HCT116 (cell line): ENCODE measurements at regions of chr20 and their contacts with region 1.

Region 1: DNA sequence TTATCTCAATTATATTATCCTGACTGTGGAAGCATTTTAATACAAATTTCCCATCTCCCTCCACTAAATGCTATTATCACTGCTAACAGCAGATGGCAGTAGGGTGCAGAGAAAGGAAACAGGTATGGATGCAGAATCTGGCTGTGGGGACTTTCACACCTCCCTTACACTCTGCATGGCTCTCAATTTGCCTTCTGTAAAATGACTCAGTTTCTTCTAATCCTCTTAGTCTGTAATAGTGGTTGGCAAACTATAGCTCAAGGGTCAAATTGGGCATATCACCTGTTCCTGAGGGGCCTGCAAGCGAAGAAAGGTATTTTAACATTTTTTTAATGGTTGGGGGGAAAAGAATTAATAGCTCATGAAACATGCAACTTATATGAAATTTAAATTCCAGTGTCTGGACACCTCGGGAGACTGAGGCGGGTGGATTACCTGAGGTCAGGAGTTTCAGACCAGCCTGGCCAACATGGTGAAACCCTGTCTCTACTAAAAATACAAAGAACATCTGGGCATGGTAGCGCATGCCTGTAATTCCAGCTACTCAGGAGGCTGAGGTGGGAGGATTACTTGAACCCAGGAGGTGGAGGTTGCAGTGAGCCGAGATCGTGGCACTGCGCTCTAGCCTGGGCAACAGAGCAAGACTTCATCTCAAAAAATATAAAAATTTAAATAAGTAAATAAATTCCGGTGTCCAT is 83.5 kb downstream of the ZMYND8 start:
- DNase-seq: peak; percentile 52
- ATAC-seq: peak; percentile 67
- H3K4me3 ChIP-seq: no peak overlapping the region
- H3K27ac ChIP-seq: no peak overlapping the region
- H3K4me1 ChIP-seq: peaks cover 36 to 44% of the 10 kb centered on the region in 2 experiments
- H3K27me3 ChIP-seq: no peaks in the 10 kb centered on the region
- CTCF ChIP-seq: peak; percentile 81 to 95 (median 93)
- POLR2A ChIP-seq: no peak
- RAD21 ChIP-seq: peak; percentile 96

Region 2: GRCh38 chr20:47196091-47197081 is 76.7 kb before region 1 on chr20:
- CTCF ChIA-PET with region 1: interaction called, 7 read pairs
- POLR2A ChIA-PET with region 1: no interaction called
- RAD21 ChIA-PET with region 1: interaction called, 3 read pairs
- intact Hi-C with region 1: loop called (anchors 5 kb)
- DNase-seq: peak; percentile 62
- ATAC-seq: peak; percentile 75
- H3K4me3 ChIP-seq: no peak overlapping the region
- H3K27ac ChIP-seq: no peak overlapping the region
- H3K4me1 ChIP-seq: peaks cover 16 to 45% of the 10 kb centered on the region in 2 experiments
- H3K27me3 ChIP-seq: no peaks in the 10 kb centered on the region
- CTCF ChIP-seq: peak; percentile 92 to 98 (median 96)
- POLR2A ChIP-seq: no peak
- RAD21 ChIP-seq: peak; percentile 99

Region 3: GRCh38 chr20:47317127-47317895 is 44.3 kb after region 1 on chr20:
- CTCF ChIA-PET with region 1: no interaction called
- POLR2A ChIA-PET with region 1: interaction called, 6 read pairs
- RAD21 ChIA-PET with region 1: interaction called in 1 of 2 experiments, 5 read pairs
- intact Hi-C with region 1: loop called (anchors 5 kb)
- DNase-seq: peak; percentile 87
- ATAC-seq: peak; percentile 65
- H3K4me3 ChIP-seq: peak overlapping the region; percentile 28 to 51
- H3K27ac ChIP-seq: peak overlapping the region; percentile 92
- H3K4me1 ChIP-seq: peaks cover 81 to 87% of the 10 kb centered on the region in 2 experiments
- H3K27me3 ChIP-seq: no peaks in the 10 kb centered on the region
- CTCF ChIP-seq: no peak
- POLR2A ChIP-seq: no peak
- RAD21 ChIP-seq: no peak

Region 4: DNA sequence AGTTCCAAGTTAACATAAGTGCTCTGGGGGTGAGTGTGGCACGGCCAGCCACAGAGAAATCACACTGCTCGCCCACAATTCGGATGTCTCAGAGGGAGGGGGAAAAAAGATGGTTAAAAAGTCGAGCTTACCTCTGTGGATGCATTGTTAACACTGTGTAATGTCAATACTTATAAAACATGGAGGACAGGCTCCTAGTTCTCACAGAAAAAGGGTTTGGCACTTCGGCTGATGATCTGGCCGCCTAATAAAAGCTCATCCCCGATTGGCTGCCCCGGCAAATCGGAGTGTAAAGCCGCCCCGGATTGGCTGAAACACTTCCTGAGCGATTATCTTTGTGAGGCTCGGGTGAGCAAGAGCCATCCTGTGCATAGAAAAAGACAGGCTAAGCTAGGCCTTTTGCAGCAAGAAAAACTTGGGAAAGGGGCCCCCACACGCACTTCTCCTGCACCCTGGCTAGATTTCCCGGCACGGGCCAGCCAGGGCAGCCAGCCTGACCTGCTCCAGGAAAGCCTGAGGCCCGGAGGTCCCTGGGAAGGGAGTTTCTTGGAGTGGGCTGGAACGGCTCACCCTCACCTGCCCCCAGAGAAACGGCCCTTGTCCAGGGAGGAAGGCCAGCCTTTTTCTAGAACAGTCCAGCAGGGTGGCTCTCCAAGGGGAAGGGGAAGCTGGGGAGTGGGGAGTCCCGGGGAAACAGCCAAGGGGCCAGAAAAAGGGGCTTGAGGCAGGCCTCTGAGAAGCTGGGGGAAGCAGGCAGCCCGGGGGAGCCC is 83.7 kb after region 1 on chr20 and contains the start of gene ZMYND8:
- CTCF ChIA-PET with region 1: interaction called, 10 read pairs
- POLR2A ChIA-PET with region 1: interaction called, 4 read pairs
- RAD21 ChIA-PET with region 1: interaction called in 1 of 2 experiments, 3 read pairs
- intact Hi-C with region 1: no loop called
- DNase-seq: peak; percentile 77
- ATAC-seq: peak; percentile 61
- H3K4me3 ChIP-seq: peak within 1 kb of the TSS; percentile 53 to 60
- H3K27ac ChIP-seq: peak within 1 kb of the TSS; percentile 98
- H3K4me1 ChIP-seq: peaks cover 69 to 80% of the 10 kb centered on the region in 2 experiments
- H3K27me3 ChIP-seq: no peaks in the 10 kb centered on the region
- CTCF ChIP-seq: no peak
- POLR2A ChIP-seq: peak; percentile 74
- RAD21 ChIP-seq: no peak
- total RNA-seq, gene ZMYND8: 29.0 TPM

Region 5: DNA sequence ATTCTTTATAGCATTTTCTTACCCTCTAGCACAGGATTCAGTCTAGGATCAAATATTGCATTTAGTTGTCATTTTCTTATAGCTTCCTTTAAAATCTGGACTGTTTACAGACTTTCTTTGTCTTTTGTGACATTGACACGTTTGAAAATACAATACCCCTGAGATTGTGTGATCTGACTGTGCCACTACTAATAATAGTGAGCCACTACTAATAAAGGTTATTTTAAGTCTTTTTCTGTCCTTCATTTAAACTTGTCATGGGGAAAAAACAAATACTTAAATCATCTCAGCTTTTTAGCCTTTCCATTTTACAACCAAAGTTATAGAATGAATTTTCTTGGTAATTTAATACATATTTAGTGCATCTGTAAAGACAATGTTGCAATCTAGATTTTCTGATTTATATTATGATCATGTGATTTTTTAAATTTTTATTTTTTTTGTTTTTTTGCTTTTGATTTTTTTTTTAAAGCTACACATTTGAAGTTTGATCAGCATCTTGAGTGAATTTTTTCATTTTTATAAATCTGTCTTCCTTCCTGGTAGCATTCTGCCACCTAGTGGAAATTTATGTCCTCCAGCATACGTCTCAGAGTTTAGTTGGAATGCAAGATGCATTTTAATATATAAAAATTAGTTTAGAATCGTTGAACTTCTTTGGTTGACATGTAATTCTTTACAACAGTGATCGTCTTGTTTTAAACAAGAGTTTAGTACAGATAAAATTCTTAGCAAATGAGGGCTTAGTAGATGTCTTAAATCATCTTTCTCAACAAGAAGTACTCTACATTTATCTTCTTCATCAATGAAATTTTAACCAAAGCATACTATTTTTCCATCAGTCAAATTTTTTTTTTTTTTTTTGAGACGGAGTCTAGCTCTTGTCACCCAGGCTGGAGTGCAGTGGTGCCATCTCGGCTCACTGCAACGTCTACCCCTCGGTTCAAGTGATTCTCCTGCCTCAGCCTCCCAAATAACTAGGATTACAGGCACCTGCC is 348.1 kb after region 1 on chr20:
- CTCF ChIA-PET with region 1: interaction called, 23 read pairs
- POLR2A ChIA-PET with region 1: no interaction called
- RAD21 ChIA-PET with region 1: interaction called, 3 read pairs
- intact Hi-C with region 1: loop called (anchors 1 kb)
- DNase-seq: peak; percentile 51
- ATAC-seq: no peak
- H3K4me3 ChIP-seq: no peak overlapping the region
- H3K27ac ChIP-seq: no peak overlapping the region
- H3K4me1 ChIP-seq: peaks cover 0 to 6% of the 10 kb centered on the region in 2 experiments; a peak in 2 of 4 replicates
- H3K27me3 ChIP-seq: no peaks in the 10 kb centered on the region
- CTCF ChIP-seq: peak; percentile 66 to 79 (median 73); a peak in 5 of 6 replicates
- POLR2A ChIP-seq: no peak
- RAD21 ChIP-seq: peak; percentile 83

Region 6: GRCh38 chr20:48049641-48050040 is 776.6 kb after region 1 on chr20:
- CTCF ChIA-PET with region 1: no interaction called
- POLR2A ChIA-PET with region 1: no interaction called
- RAD21 ChIA-PET with region 1: no interaction called
- intact Hi-C with region 1: no loop called
- DNase-seq: no peak
- ATAC-seq: no peak
- H3K4me3 ChIP-seq: no peak overlapping the region
- H3K27ac ChIP-seq: no peak overlapping the region
- H3K4me1 ChIP-seq: 0 out of 4 replicates have a peak, but pooled peaks cover 0 to 2% of the 10 kb centered on the region in 2 experiments
- H3K27me3 ChIP-seq: 0 out of 2 replicates have a peak, but pooled peaks cover 6% of the 10 kb centered on the region
- CTCF ChIP-seq: no peak
- POLR2A ChIP-seq: no peak
- RAD21 ChIP-seq: no peak